ENCODE measurements at regions of chr21 and their contacts with region 1.

Region 1: DNA sequence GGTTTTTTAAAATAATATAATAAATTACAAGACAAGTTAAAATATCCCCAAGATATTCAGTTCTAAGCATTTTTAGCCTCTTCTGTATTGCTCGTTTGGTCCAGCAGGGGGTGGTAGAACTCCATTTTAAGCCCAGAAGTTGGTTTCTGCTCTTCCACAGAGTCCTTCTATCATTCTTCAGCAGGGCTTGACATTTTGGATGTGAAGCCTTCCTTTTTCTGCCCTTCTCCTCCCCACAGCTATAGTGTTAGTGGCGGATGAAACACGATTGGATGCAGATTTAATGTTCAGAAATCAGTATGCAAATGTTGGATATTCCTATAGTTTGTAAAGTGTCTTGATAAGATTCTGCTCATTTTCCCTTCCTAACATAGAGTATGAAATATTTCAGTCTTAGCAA is 1.4 kb downstream of the NCAM2 start:
- DNase-seq: peak in 6 of 10 donors; percentile 32 to 90 (median 69)

Region 2: DNA sequence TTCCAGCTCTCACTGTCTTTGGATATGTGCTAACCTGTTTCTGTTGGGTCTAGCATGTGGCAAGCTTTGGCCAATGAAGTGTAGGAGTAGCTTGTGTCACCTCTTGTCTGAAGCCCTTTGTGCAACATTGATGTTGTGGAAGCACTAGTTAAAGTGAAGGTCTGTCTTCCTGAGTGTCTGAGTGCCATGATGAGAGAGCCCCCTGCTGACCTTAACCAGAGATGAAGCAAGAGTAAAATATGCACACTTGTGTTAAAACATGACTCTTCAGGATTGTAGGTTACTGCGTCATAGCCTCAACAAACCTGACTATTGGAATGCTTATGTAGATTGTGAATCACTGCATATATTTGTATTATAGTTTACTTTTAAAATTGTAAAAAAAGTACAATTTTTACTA is 102.3 kb after region 1 on chr21:
- intact Hi-C with region 1: loop called (anchors 1 kb)
- DNase-seq: peak in 3 of 10 donors; percentile 16 to 83 (median 51)

Region 3: DNA sequence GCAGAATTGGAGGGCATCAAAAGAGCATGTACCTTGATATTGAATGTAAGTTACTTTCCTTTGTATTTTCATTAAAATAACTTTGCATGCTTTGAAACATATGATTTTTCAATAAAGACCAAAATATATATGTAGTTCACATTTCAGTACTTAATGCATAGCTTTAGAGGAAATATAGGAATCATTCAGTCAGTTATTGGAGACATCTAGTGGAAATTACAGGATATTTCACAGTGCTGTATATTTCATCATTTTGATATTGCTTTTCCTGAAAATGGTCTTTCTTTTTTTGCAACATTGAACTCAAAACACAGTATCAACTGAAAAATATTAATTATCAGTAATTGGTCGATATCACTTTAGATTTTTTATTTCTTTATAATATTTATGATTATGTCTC is 374.3 kb after region 1 on chr21:
- intact Hi-C with region 1: loop called (anchors 5 kb)
- DNase-seq: no peak

Region 4: DNA sequence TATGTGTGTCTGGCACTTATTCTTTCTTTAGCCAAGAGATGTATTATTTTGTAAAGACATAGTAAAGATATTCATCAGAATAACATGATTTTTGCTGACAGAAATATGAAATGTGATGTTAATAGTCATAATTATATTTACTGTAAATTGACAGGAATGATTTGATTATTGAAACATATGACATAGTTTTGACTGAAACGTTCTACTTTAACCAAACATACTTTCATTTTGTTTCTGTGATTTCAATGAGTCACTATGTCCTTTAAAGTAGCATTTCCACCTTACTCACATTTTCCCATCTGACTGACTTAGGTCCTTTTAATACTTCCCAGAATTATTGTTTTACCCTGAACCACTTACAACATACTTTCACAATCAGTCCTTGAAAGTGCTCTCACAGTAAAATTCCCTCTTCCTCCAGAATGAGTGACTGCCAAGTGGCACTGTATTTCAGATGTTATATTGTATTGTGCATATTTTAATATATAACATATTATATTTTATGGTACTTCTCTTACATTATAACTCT is 436.4 kb after region 1 on chr21:
- intact Hi-C with region 1: no loop called
- DNase-seq: no peak

Region 5: DNA sequence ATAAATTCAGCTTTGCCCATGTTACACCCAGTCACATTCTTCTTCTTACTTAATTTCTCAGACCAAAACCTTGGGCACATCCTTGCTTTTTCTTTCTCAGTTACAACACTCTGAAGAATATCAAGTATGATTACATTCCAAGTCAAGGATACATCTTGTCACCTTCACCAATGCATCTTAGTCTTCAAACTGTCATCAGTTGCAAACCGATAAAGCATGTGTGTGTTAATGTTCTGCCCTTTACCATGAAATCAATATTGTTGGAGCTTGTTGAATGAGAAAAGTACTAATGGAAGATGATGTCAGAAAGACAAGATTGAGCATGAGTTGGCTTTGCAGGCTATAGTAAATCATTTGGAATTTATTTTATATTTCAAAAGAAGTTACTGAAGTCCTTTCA is 763.2 kb after region 1 on chr21:
- intact Hi-C with region 1: no loop called
- DNase-seq: no peak

Region 6: DNA sequence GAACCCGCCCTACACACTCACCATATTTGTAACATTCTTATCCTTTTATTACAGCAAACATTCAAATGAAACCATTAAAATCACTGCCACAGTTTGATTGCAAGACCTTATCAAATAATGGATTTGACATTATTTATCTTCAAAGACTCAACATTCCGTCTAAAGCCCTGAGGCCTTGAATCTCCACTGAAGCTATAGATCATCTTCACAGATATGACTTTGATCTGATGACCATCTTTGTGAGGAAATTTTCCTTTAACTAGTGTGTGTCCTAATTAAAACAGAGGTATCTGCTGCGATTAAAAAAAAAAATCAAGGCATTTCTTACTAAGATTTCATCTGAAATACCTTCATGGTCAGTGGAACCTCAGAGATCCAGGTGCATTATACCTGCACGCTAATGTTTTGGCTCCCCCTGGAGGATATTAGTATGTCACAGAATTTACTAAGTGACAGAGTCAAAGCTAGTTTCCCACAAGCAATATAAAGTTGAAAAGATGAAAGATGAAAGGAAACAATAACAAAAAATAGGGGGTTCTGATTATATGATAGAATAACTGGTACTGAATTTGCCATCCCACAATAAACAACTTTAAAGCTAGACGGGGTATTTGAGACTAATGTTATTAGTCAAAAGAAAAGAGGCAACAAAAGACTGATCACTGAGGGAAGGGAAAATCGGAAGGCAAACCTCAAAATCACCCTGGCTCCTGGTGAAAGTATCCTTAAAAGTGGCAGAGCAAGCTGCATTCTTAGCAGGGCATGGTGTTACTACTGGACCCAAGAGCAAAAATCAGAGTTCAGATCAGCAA is 922.0 kb after region 1 on chr21:
- intact Hi-C with region 1: loop called (anchors 10 kb)
- DNase-seq: no peak

Region 7: GRCh38 chr21:22791986-22792560 is 1792.4 kb after region 1 on chr21:
- intact Hi-C with region 1: loop called (anchors 5 kb)
- DNase-seq: peak in 1 of 10 donors; percentile 6

Measured in posterior cingulate gyrus (tissue), 11 donors.